MCF 10A (cell line): ENCODE measurements at regions of chr18 and their contacts with region 1.

Region 1: DNA sequence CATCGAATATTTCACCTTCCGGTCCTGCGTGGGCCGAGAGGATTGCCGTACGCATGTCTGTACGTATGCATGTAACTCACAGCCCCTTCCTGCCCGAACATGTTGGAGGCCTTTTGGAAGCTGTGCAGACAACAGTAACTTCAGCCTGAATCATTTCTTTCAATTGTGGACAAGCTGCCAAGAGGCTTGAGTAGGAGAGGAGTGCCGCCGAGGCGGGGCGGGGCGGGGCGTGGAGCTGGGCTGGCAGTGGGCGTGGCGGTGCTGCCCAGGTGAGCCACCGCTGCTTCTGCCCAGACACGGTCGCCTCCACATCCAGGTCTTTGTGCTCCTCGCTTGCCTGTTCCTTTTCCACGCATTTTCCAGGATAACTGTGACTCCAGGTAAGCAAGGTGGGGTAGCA is at the start of gene SERPINB5:
- DNase-seq: peak; percentile 99
- H3K4me3 Mint-ChIP-seq: peak within 1 kb of the TSS; percentile 95
- H3K27ac Mint-ChIP-seq: peak within 1 kb of the TSS; percentile 99
- H3K4me1 Mint-ChIP-seq: peaks cover 34% of the 10 kb centered on the region
- H3K27me3 Mint-ChIP-seq: no peaks in the 10 kb centered on the region
- CTCF ChIP-seq: no peak
- total RNA-seq, gene SERPINB5: 254 and 330 TPM in 2 replicates

Region 2: GRCh38 chr18:63422087-63422809 is 54.4 kb before region 1 on chr18 and contains the start of gene VPS4B:
- CTCF ChIA-PET with region 1: interaction called, 3 read pairs
- POLR2A ChIA-PET with region 1: interaction called, 270 read pairs
- intact Hi-C with region 1: no loop called
- DNase-seq: peak; percentile 99
- H3K4me3 Mint-ChIP-seq: peak within 1 kb of the TSS; percentile 91
- H3K27ac Mint-ChIP-seq: peak within 1 kb of the TSS; percentile 100
- H3K4me1 Mint-ChIP-seq: peaks cover 12% of the 10 kb centered on the region
- H3K27me3 Mint-ChIP-seq: no peaks in the 10 kb centered on the region
- CTCF ChIP-seq: no peak
- total RNA-seq, gene VPS4B: 67.8 and 89.8 TPM in 2 replicates

Region 3: DNA sequence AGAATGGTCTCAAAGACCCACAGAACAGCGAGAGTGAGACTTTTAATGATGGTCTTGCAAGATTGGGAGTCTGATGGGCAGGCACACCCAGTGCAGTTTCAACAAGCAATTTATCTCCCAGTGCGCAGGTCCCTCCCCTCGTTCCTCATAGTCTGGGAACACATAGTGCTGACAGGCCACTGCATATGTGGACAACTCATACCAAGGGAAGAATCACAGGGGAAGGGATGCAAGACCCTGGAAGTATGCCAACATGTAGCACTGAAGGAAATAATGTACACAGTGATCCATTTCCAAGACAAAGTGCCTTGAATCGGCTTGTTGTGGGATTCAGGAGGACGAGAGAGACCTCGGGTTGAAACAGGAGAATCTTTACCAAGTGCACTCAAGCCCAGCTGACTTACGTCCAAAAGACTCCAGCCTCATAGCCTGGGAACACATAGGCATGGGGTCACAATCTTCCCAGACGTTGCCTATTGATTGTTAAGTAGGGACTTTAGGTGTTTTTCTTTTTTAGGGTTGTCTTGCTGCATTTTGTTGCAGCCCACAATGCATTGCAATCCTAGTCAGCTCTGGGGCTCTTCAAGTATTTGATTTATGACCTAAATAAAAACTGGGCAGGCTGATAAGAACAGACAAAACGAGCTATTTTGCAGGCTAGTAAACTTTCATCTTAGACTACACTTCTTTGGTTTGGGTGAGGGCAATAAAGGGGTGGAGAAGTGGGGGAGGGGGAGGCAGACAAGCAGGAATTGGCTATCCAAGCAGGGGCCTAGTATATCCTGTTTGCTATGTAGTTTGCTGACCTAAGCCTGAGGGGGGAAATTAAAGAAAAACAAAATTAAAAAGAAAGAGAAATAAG is 24.6 kb before region 1 on chr18:
- CTCF ChIA-PET with region 1: interaction called, 47 read pairs
- POLR2A ChIA-PET with region 1: interaction called, 863 read pairs
- intact Hi-C with region 1: no loop called
- DNase-seq: peak; percentile 92
- H3K4me3 Mint-ChIP-seq: peak overlapping the region; percentile 68
- H3K27ac Mint-ChIP-seq: peak overlapping the region; percentile 89
- H3K4me1 Mint-ChIP-seq: peaks cover 45% of the 10 kb centered on the region
- H3K27me3 Mint-ChIP-seq: no peaks in the 10 kb centered on the region
- CTCF ChIP-seq: no peak

Region 4: GRCh38 chr18:63487676-63488075 is 11.0 kb after region 1 on chr18:
- CTCF ChIA-PET with region 1: interaction called, 6 read pairs
- POLR2A ChIA-PET with region 1: interaction called, 120 read pairs
- intact Hi-C with region 1: no loop called
- DNase-seq: no peak
- H3K4me3 Mint-ChIP-seq: no peak overlapping the region
- H3K27ac Mint-ChIP-seq: peak overlapping the region; percentile 39
- H3K4me1 Mint-ChIP-seq: peaks cover 39% of the 10 kb centered on the region
- H3K27me3 Mint-ChIP-seq: no peaks in the 10 kb centered on the region
- CTCF ChIP-seq: no peak